ENCODE measurements at regions of chr4 and their contacts with region 1.

Region 1: DNA sequence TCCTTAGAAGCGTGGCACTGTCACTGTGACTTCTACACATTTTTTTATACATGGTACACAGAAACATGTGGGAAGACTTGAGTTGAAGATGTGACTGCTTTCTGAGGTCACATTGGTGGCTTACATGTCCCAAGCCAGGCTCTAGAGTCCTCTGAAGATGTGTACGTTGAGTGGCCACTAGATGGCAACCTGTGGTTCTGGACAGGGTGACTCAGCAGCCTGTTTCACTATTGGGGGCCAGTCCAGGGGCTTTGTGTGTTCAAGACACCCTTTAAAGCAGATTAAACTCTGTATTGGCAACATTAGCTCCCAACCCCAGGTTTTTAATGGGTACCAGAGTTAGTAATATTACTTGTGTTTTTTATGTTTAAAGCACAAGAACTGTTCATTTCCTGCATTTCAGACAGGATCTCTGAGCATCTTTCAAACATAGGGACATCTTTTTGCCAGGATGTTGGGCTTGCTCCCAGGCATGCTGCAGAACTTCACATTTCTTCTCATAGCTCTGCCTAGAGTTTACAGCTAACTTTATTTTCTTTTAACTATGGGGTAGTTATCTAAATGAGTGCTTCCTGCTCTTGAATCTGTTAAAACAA is 53.0 kb downstream of the DCUN1D4 start:
- DNase-seq: peak; percentile 3
- H3K4me3 ChIP-seq: no peak overlapping the region
- CTCF ChIP-seq: peak; percentile 82

Region 2: DNA sequence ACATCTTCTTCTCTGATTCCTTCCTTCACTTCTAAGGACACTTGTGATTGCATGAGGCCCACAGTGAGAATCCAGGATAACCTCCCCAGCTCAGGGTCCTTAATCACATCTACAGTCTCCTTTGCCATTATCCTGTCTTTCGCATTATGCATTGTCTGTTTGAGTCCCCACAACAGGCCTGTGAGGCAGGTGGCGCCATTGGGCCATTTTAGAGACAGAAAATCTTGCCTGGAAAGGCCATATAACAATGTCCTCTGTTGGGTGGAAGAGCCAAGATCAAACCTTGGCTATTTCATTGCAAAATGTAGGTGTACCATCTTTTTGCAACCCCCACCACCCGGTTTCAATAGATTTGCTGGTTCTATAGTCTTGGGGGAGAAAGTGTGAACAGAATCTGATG is 64.8 kb before region 1 on chr4:
- CTCF ChIA-PET with region 1: interaction called, 14 read pairs
- POLR2A ChIA-PET with region 1: no interaction called
- DNase-seq: no peak
- H3K4me3 ChIP-seq: no peak overlapping the region
- CTCF ChIP-seq: peak; percentile 76

Region 3: GRCh38 chr4:51862781-51863180 is 33.1 kb before region 1 on chr4:
- CTCF ChIA-PET with region 1: interaction called, 12 read pairs
- POLR2A ChIA-PET with region 1: no interaction called
- DNase-seq: no peak
- H3K4me3 ChIP-seq: no peak overlapping the region
- CTCF ChIP-seq: no peak

Region 4: DNA sequence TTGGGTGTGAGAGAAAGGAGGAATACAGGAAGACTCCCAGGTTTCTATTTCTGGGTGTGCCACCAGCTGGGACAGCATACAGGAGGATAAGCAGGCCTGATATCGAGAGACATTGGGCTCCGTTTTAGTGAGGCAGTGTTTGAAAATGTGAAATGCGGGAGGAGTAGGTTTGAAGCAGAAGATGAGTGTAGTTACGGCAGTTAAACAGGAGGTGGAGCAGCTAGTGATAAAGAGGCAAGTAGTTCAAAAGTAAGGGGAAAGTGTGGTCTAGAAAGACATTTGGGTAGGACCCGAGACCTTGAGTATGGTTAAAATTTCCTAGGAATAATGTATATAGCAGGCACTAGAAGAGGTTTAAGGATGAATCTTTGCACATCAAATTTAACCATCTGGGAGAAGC is 10.5 kb before region 1 on chr4:
- CTCF ChIA-PET with region 1: interaction called, 47 read pairs
- POLR2A ChIA-PET with region 1: no interaction called
- DNase-seq: no peak
- H3K4me3 ChIP-seq: no peak overlapping the region
- CTCF ChIP-seq: peak; percentile 29

Region 5: GRCh38 chr4:52015366-52015765 is 119.5 kb after region 1 on chr4:
- CTCF ChIA-PET with region 1: interaction called, 17 read pairs
- POLR2A ChIA-PET with region 1: no interaction called
- DNase-seq: no peak
- H3K4me3 ChIP-seq: no peak overlapping the region
- CTCF ChIP-seq: no peak